ENCODE measurements at regions of chr3 and their contacts with region 1.

Region 1: GRCh38 chr3:172580680-172581401 is 57.6 kb upstream of the TNFSF10 start:
- DNase-seq: no peak
- H3K4me3 ChIP-seq: no peak overlapping the region
- H3K27ac ChIP-seq: no peak overlapping the region
- H3K4me1 ChIP-seq: peaks cover 19% of the 10 kb centered on the region
- H3K27me3 ChIP-seq: no peaks in the 10 kb centered on the region
- CTCF ChIP-seq: no peak

Region 2: DNA sequence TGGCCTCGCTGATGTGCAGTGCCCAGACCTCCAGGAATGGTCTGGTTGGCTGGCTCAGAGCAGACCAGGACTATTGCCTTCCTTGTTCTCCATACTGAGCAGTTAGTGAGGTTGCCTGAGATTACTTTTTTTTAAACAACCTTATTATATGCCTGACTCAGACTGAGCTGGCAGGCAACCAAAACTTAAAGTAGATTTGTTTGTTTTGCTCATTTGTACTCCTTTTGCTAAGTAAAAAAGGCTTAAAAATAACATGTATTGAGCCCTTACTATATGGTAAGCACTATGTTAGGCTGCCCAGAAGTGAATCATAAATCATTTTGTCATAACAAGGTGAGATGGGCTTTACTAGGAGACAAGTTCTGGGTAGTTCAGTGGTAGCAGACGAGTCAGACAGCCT is 225.0 kb before region 1 on chr3:
- CTCF ChIA-PET with region 1: no interaction called
- dilution Hi-C with region 1: no loop called
- in situ Hi-C with region 1: no loop called
- intact Hi-C with region 1: no loop called
- DNase-seq: peak; percentile 74
- H3K4me3 ChIP-seq: no peak overlapping the region
- H3K27ac ChIP-seq: no peak overlapping the region
- H3K4me1 ChIP-seq: peaks cover 7% of the 10 kb centered on the region
- H3K27me3 ChIP-seq: no peaks in the 10 kb centered on the region
- CTCF ChIP-seq: no peak

Region 3: GRCh38 chr3:172511783-172512762 is 68.8 kb before region 1 on chr3:
- CTCF ChIA-PET with region 1: no interaction called
- dilution Hi-C with region 1: loop called (anchors 10 kb)
- in situ Hi-C with region 1: no loop called
- intact Hi-C with region 1: no loop called
- DNase-seq: no peak
- H3K4me3 ChIP-seq: no peak overlapping the region
- H3K27ac ChIP-seq: no peak overlapping the region
- H3K4me1 ChIP-seq: peaks cover 14% of the 10 kb centered on the region
- H3K27me3 ChIP-seq: no peaks in the 10 kb centered on the region
- CTCF ChIP-seq: no peak

Region 4: DNA sequence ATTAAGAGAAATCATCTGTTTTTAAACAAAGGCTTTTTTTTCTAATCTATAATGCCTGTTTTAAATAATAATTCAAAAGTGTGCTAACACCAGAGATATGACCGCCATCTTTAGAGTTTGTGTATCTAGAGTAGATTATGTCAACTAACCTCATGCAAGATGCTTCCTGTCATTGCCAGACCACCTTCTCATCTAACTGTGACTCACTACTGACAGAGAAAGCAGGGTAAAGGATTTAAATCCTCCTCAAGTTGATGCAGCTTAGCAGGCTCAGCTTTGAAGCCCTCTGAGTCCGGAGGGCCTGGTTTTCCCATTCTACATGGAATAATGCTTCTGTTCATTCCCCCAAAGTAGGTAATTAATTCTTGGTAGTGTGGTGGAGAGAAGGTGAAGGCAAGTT is 278.2 kb after region 1 on chr3:
- CTCF ChIA-PET with region 1: no interaction called
- dilution Hi-C with region 1: no loop called
- in situ Hi-C with region 1: no loop called
- intact Hi-C with region 1: no loop called
- DNase-seq: no peak
- H3K4me3 ChIP-seq: no peak overlapping the region
- H3K27ac ChIP-seq: no peak overlapping the region
- H3K4me1 ChIP-seq: no peaks in the 10 kb centered on the region
- H3K27me3 ChIP-seq: peaks cover 5% of the 10 kb centered on the region
- CTCF ChIP-seq: no peak

Measured in mammary epithelial cell (primary cell).